H1 (cell line): ENCODE measurements at regions of chr19 and their contacts with region 1.

Region 1: DNA sequence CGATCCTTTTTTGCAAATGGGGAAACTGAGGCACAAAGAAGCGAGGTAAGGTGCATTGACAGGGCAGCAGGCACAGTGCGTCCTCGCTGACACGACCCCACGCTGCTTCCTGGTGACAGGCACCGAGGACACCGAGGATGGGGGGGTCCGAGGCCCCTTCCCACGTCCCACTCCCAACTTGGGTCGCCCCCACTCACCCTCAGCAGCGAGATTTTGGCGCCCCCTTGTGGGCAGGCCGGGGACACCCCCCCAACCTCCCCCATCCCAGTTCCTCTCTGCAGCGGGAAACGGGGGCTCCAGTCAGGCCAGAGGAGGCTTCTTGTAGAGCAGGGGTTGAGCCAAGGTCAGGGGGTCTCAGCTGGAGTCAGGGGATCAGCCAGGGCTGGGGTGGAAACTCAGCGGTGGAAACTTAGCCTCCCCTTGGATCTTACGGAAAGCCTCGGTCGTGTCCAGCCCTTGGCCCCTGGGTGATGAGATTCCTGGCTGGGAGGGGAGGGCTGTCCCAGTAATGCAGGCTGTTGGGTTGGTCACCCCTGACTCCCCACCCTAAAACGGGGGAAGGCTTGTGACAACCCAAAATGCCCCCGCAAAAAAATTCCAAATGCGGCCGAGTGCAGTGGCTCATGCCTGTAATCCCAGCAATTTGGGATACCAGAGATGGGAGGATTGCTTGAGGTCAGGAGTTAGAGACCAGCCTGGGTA is 8.2 kb downstream of the SMIM24 start:
- DNase-seq: peak in 1 of 2 experiments; percentile 86
- H3K4me3 ChIP-seq: no peak overlapping the region
- H3K27ac ChIP-seq: no peak overlapping the region
- H3K4me1 ChIP-seq: no peaks in the 10 kb centered on the region
- H3K27me3 ChIP-seq: peaks cover 0 to 16% (median 9%) of the 10 kb centered on the region in 4 experiments; a peak in 6 of 7 replicates
- CTCF ChIP-seq: peak; percentile 75 to 85 (median 82)
- EP300 ChIP-seq: no peak
- POLR2A ChIP-seq: no peak
- RAD21 ChIP-seq: peak; percentile 69 to 81

Region 2: GRCh38 chr19:3270902-3271301 is 201.2 kb before region 1 on chr19:
- CTCF ChIA-PET with region 1: no interaction called
- POLR2A ChIA-PET with region 1: no interaction called
- DNase-seq: no peak
- H3K4me3 ChIP-seq: peak overlapping the region in 1 of 4 experiments; percentile 32; a peak in 1 of 8 replicates
- H3K27ac ChIP-seq: no peak overlapping the region
- H3K4me1 ChIP-seq: peaks cover 0 to 16% (median 4%) of the 10 kb centered on the region in 4 experiments; a peak in 5 of 7 replicates
- H3K27me3 ChIP-seq: peaks cover 0 to 10% (median 6%) of the 10 kb centered on the region in 4 experiments; a peak in 4 of 7 replicates
- CTCF ChIP-seq: no peak
- EP300 ChIP-seq: no peak
- POLR2A ChIP-seq: no peak
- RAD21 ChIP-seq: no peak

Region 3: DNA sequence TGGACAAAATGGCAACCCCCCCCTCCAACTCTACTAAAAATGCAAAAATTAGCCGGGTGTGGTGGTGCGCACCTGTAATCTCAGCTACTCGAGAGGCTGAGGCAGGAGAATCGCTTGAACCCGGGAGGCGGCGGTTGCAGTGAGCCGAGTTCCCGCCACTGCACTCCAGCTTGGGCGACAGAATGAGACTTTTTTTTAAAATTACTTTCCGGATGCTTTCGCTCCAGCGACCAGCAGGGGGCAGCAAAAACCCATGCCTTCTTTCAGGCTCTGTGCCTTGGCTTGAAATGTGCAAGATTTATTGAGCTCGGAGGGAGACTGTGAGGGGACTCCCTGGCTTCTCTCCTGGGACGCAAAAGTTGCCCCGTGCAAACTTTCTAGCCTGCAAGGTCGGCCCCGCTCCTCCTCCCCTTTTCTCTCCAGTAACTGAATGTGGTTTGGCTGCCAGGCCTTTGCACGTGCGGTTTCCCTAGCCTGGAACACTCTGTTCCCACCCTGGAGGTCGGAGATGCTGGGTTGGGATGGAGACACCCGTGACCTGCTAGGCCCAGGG is 167.2 kb before region 1 on chr19:
- CTCF ChIA-PET with region 1: interaction called, 10 read pairs
- POLR2A ChIA-PET with region 1: no interaction called
- DNase-seq: peak in 1 of 2 experiments; percentile 92
- H3K4me3 ChIP-seq: no peak overlapping the region
- H3K27ac ChIP-seq: no peak overlapping the region
- H3K4me1 ChIP-seq: no peaks in the 10 kb centered on the region
- H3K27me3 ChIP-seq: peaks cover 0 to 8% (median 4%) of the 10 kb centered on the region in 4 experiments; a peak in 4 of 7 replicates
- CTCF ChIP-seq: peak; percentile 66 to 76 (median 71)
- EP300 ChIP-seq: no peak
- POLR2A ChIP-seq: no peak
- RAD21 ChIP-seq: peak; percentile 74 to 79

Region 4: GRCh38 chr19:3336680-3337523 is 135.2 kb before region 1 on chr19:
- CTCF ChIA-PET with region 1: interaction called, 17 read pairs
- POLR2A ChIA-PET with region 1: no interaction called
- DNase-seq: no peak
- H3K4me3 ChIP-seq: no peak overlapping the region
- H3K27ac ChIP-seq: no peak overlapping the region
- H3K4me1 ChIP-seq: no peaks in the 10 kb centered on the region
- H3K27me3 ChIP-seq: peaks cover 0 to 6% (median 1%) of the 10 kb centered on the region in 4 experiments; a peak in 1 of 7 replicates
- CTCF ChIP-seq: no peak
- EP300 ChIP-seq: no peak
- POLR2A ChIP-seq: no peak
- RAD21 ChIP-seq: no peak

Region 5: GRCh38 chr19:3353493-3353892 is 118.6 kb before region 1 on chr19:
- CTCF ChIA-PET with region 1: interaction called, 13 read pairs
- POLR2A ChIA-PET with region 1: no interaction called
- DNase-seq: no peak
- H3K4me3 ChIP-seq: no peak overlapping the region
- H3K27ac ChIP-seq: no peak overlapping the region
- H3K4me1 ChIP-seq: no peaks in the 10 kb centered on the region; a peak in 1 of 7 replicates
- H3K27me3 ChIP-seq: peaks cover 23 to 60% (median 44%) of the 10 kb centered on the region in 4 experiments
- CTCF ChIP-seq: no peak
- EP300 ChIP-seq: no peak
- POLR2A ChIP-seq: no peak
- RAD21 ChIP-seq: no peak

Region 6: GRCh38 chr19:3440082-3440481 is 32.0 kb before region 1 on chr19:
- CTCF ChIA-PET with region 1: interaction called, 66 read pairs
- POLR2A ChIA-PET with region 1: no interaction called
- DNase-seq: peak in 1 of 2 experiments; percentile 92
- H3K4me3 ChIP-seq: no peak overlapping the region
- H3K27ac ChIP-seq: no peak overlapping the region
- H3K4me1 ChIP-seq: peaks cover 3 to 15% (median 10%) of the 10 kb centered on the region in 4 experiments
- H3K27me3 ChIP-seq: no peaks in the 10 kb centered on the region
- CTCF ChIP-seq: peak; percentile 78 to 83 (median 78)
- EP300 ChIP-seq: no peak
- POLR2A ChIP-seq: no peak
- RAD21 ChIP-seq: peak; percentile 84 to 87

Region 7: GRCh38 chr19:3459089-3459881 is 12.8 kb before region 1 on chr19:
- CTCF ChIA-PET with region 1: interaction called, 22 read pairs
- POLR2A ChIA-PET with region 1: no interaction called
- DNase-seq: no peak
- H3K4me3 ChIP-seq: peak overlapping the region in 1 of 4 experiments; percentile 48; a peak in 3 of 8 replicates
- H3K27ac ChIP-seq: no peak overlapping the region
- H3K4me1 ChIP-seq: peaks cover 0 to 24% (median 12%) of the 10 kb centered on the region in 4 experiments; a peak in 6 of 7 replicates
- H3K27me3 ChIP-seq: peaks cover 24 to 56% (median 46%) of the 10 kb centered on the region in 4 experiments
- CTCF ChIP-seq: no peak
- EP300 ChIP-seq: no peak
- POLR2A ChIP-seq: no peak
- RAD21 ChIP-seq: no peak

Region 8: DNA sequence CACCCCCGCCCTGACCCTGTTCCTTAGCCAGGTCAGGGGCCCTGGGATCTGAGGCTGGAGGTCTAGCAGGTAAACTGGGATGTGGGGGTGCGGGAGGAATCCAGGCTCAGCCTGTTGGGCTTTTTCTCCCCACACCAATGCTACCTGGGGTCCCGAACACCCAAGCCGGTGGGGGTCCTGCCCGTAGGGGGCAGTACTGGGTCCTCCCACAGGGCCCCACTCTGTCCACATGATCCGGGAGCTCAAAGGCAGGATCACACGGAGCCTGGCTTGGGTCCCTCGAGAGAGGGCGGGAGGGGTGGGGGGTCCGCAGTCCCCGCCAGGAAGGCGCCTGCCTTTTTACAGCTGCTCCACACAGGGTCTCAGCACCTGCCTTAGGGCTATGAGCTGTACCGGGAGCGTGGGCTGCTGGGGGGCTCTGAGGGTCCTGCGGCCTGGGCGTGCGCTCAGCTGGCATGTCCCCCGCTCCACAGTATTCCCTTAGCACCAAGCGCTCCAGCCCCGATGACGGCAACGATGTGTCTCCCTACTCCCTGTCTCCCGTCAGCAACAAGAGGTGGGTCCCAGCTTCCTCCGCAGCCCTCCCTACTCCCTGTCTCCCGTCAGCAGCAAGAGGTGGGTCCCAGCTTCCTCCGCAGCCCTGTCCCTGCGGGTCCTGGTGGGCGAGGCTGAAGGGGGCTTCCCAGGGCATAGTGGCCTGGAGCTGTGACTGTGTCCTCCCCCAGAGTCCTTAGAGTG is 54.6 kb after region 1 on chr19:
- CTCF ChIA-PET with region 1: no interaction called
- POLR2A ChIA-PET with region 1: no interaction called
- DNase-seq: no peak
- H3K4me3 ChIP-seq: no peak overlapping the region
- H3K27ac ChIP-seq: no peak overlapping the region
- H3K4me1 ChIP-seq: no peaks in the 10 kb centered on the region; a peak in 1 of 7 replicates
- H3K27me3 ChIP-seq: no peaks in the 10 kb centered on the region
- CTCF ChIP-seq: peak; percentile 9 to 48 (median 29); a peak in 2 of 4 replicates
- EP300 ChIP-seq: no peak
- POLR2A ChIP-seq: no peak
- RAD21 ChIP-seq: no peak